ENCODE measurements at regions of chr1 and their contacts with region 1.

Region 1: GRCh38 chr1:102434421-102434820 is 437.7 kb upstream of the OLFM3 start:
- DNase-seq: no peak
- ATAC-seq: no peak

Region 2: DNA sequence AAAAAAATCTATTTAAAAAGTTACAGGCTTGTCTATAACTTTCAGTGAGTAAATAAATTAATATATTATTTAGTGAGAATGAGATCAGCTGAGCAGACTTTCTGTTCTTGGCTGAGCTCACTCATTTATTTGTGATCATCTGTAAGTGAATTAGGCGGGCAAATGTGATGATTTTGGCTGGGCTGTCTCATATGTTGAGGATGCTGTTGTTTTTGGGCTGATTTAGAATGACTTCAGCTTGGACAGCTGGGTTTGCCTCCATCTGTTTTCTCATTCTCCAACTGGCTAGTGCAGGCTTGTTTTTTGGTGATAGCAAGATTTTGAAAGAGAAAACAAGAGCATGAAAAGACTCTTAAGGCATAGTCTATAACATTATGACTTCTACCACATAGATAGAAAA is 38.1 kb after region 1 on chr1:
- intact Hi-C with region 1: loop called (anchors 2 kb)
- DNase-seq: no peak
- ATAC-seq: peak; percentile 25